Activated B cell treated with CpG ODN at 0.5 μM for 24 hours (primary cell): ENCODE measurements at regions of chr22 and their contacts with region 1.

Region 1: DNA sequence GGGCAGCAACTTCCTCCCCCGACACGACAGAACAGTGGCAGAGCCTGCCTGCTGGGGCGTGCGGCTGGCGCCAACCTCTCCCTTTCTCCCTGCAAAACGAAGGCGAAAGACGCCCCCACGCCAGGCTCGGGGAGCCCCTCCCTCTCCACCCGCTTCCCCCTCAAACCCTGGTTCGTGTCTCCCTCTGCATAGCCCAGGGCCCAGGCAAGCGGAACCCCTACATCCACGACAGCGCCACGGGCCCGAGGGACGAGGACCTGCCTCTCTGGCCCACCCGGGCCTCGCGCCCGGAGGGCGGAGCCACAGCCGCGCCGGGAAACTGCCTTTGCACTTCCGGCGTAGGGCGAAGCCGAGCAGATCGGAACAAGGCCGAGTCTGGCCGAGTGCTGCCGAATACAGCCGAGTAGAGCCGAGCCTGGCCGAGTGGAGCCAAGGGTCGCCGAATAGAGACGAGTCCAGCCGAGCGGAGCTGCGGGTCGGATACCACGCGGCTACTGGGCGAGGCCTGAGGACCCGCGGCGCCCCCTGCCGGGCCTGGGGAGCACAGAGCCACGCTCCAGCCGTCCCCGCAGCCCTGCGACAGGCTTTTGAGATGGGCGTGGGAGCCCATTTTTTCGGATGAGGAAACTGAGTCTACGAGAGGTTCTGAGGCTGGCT is 11.2 kb upstream of the C1QTNF6 start:
- DNase-seq: peak; percentile 99
- ATAC-seq: peak; percentile 97
- H3K4me3 Mint-ChIP-seq: peak overlapping the region; percentile 87
- H3K27ac Mint-ChIP-seq: peak overlapping the region; percentile 94
- H3K4me1 Mint-ChIP-seq: peaks cover 28% of the 10 kb centered on the region
- H3K27me3 Mint-ChIP-seq: no peaks in the 10 kb centered on the region
- CTCF ChIP-seq: peak; percentile 22

Region 2: DNA sequence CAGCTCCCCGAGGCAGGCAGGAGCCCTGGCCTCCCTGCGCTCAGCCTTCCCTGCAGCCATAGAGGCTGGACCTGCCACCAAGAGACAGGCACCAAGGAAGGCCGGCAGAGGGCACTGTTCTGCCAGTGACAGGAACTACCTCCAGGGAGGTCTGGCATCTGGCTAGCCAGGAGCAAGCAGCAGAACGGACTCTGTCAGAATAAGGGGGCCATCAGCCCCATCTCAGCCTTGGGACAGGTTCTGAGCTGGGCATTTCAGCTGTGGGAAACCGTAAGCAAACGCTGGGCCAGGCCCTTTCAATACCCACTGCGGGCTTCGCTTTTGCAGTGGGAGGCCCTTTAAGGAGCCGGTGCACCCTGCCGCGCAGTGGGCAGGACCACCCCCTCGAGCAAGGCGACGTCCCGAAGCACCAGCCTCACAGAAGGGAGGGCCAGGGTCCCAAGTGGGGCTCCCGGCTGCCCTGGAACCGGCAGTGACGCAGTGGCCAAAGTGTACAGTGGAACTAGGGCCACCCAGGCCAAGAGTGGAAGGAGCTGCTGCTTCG is 441.5 kb before region 1 on chr22:
- CTCF ChIA-PET with region 1: interaction called, 3 read pairs
- POLR2A ChIA-PET with region 1: no interaction called
- intact Hi-C with region 1: loop called (anchors 1 kb)
- DNase-seq: peak; percentile 66
- ATAC-seq: peak; percentile 81
- H3K4me3 Mint-ChIP-seq: no peak overlapping the region
- H3K27ac Mint-ChIP-seq: no peak overlapping the region
- H3K4me1 Mint-ChIP-seq: no peaks in the 10 kb centered on the region
- H3K27me3 Mint-ChIP-seq: peaks cover 16% of the 10 kb centered on the region
- CTCF ChIP-seq: peak; percentile 41

Region 3: GRCh38 chr22:36856121-36856791 is 343.0 kb before region 1 on chr22:
- CTCF ChIA-PET with region 1: interaction called, 4 read pairs
- POLR2A ChIA-PET with region 1: no interaction called
- intact Hi-C with region 1: loop called (anchors 2 kb)
- DNase-seq: peak; percentile 96
- ATAC-seq: peak; percentile 39
- H3K4me3 Mint-ChIP-seq: peak overlapping the region; percentile 69
- H3K27ac Mint-ChIP-seq: peak overlapping the region; percentile 91
- H3K4me1 Mint-ChIP-seq: peaks cover 64% of the 10 kb centered on the region
- H3K27me3 Mint-ChIP-seq: no peaks in the 10 kb centered on the region
- CTCF ChIP-seq: peak; percentile 100

Region 4: GRCh38 chr22:37077884-37078485 is 121.2 kb before region 1 on chr22:
- CTCF ChIA-PET with region 1: interaction called, 16 read pairs
- POLR2A ChIA-PET with region 1: interaction called, 6 read pairs
- intact Hi-C with region 1: loop called (anchors 1 kb)
- DNase-seq: peak; percentile 81
- ATAC-seq: peak; percentile 60
- H3K4me3 Mint-ChIP-seq: no peak overlapping the region
- H3K27ac Mint-ChIP-seq: peak overlapping the region; percentile 50
- H3K4me1 Mint-ChIP-seq: peaks cover 25% of the 10 kb centered on the region
- H3K27me3 Mint-ChIP-seq: no peaks in the 10 kb centered on the region
- CTCF ChIP-seq: peak; percentile 87

Region 5: DNA sequence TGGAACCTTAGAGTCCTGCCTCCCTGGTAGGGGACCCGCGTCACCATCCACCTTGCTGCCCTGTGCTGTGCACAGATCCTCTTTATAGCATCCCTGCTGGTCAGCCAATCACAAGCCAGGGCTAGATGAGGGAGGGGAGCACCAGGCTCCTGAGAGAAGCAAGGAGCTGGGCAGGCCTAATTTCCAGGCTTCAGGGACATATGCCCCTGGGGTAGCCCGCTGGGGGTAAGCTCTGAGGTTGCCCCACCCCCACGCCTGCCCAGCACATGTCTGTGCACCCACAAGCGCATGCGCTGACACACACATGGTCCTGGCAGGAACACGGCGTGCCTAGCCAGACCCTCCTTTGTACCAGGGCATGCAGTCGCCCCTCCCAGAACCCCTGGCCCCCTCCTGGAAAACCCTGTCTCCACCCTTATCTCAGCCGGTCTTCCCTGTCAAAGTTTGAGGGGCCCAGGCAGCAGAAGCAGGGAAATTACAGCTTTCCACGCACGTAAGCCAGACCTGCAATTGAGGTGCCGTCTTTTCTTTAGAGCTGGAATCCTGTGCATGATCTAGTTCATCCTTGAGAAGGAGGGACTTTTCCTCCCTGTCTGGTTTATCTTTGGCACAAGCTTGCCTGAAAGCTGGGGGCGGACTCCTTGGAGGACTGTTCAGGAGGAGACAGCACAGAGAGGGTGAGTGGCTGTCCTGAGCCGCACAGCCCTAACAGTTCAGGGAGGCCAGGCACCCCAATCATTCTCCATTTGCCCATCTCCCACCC is 11.0 kb after region 1 on chr22:
- CTCF ChIA-PET with region 1: no interaction called
- POLR2A ChIA-PET with region 1: interaction called, 35 read pairs
- intact Hi-C with region 1: no loop called
- DNase-seq: peak; percentile 4
- ATAC-seq: no peak
- H3K4me3 Mint-ChIP-seq: no peak overlapping the region
- H3K27ac Mint-ChIP-seq: no peak overlapping the region
- H3K4me1 Mint-ChIP-seq: peaks cover 2% of the 10 kb centered on the region
- H3K27me3 Mint-ChIP-seq: no peaks in the 10 kb centered on the region
- CTCF ChIP-seq: no peak

Region 6: GRCh38 chr22:37229805-37230672 is 30.8 kb after region 1 on chr22:
- CTCF ChIA-PET with region 1: interaction called, 17 read pairs
- POLR2A ChIA-PET with region 1: interaction called, 54 read pairs
- intact Hi-C with region 1: no loop called
- DNase-seq: peak; percentile 70
- ATAC-seq: peak; percentile 82
- H3K4me3 Mint-ChIP-seq: peak overlapping the region; percentile 72
- H3K27ac Mint-ChIP-seq: peak overlapping the region; percentile 99
- H3K4me1 Mint-ChIP-seq: peaks cover 91% of the 10 kb centered on the region
- H3K27me3 Mint-ChIP-seq: no peaks in the 10 kb centered on the region
- CTCF ChIP-seq: no peak

Region 7: DNA sequence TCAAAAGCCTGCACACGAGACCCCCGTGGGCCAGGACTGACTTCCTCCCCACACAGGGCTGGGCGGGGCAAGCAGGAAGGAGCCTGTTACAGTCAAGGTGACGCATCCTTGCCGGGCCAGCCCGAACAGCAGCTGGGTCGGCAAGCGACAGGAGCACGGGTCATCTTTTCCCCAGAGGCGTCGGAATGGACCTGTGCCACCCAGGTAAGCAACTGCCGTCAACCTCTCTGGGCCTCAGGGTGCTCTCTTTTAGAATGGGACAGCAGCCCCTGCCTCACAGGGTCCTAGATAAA is 83.1 kb after region 1 on chr22 and contains the start of gene CYTH4:
- CTCF ChIA-PET with region 1: interaction called, 4 read pairs
- POLR2A ChIA-PET with region 1: interaction called, 10 read pairs
- intact Hi-C with region 1: no loop called
- DNase-seq: peak; percentile 64
- ATAC-seq: peak; percentile 69
- H3K4me3 Mint-ChIP-seq: peak within 1 kb of the TSS; percentile 86
- H3K27ac Mint-ChIP-seq: peak within 1 kb of the TSS; percentile 99
- H3K4me1 Mint-ChIP-seq: peaks cover 81% of the 10 kb centered on the region
- H3K27me3 Mint-ChIP-seq: no peaks in the 10 kb centered on the region
- CTCF ChIP-seq: no peak
- total RNA-seq, gene CYTH4: 37.2 and 40.3 TPM in 2 replicates